HepG2 (cell line): ENCODE measurements at regions of chr19 and their contacts with region 1.

Region 1: DNA sequence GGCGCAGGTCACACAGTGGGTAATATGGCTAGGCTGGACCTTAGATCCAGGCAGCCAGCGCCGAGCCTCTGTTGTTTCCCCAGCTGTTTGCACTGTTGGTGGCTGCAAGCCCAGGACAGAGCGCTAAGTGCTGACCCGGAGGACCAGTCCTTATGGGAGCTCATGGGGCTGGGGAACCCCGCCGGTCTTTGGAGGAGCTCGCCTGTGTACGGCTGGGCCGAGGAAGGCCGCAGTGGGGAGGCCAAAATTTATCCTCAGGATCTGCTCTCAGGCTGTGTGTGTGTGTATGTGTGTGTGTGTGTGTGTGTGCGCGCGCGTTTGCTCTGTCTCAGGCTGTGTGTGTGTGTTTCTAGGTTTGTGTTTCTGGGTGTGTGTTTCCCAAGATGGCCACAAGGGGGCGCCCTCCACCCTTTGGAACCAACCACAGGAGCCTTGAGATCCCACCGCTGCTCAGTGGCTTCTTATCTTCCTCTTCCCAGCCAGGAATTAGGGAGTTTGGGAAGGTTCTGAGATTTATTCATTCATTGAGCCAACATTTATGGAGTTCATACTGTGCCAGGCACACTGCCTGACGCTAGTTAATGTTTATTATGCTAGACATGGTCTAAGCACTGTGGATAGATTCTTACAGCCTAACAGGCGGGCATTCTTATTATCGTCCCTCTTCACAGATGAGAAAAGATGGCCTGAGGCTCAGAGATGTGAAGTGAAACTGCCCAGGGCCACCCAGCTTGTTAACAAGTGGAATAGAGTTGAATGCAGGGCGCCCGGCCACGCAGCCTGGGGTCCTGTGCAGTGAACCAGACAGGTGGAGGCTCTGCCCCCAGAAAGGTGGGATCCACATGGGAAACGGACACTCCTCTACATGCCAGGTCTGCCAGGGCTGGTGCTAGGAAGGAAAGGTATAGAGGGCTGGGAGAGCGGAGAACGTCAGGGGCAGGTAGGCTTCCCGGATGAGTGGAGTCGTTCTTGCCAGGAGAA is 13.0 kb downstream of the PGLYRP1 start:
- DNase-seq: peak; percentile 28
- ATAC-seq: peak; percentile 88
- H3K4me3 ChIP-seq: no peak overlapping the region; a peak in 1 of 6 replicates
- H3K27ac ChIP-seq: no peak overlapping the region
- H3K4me1 ChIP-seq: no peaks in the 10 kb centered on the region
- H3K27me3 ChIP-seq: no peaks in the 10 kb centered on the region
- CTCF ChIP-seq: peak; percentile 80
- EP300 ChIP-seq: no peak
- POLR2A ChIP-seq: no peak
- RAD21 ChIP-seq: peak; percentile 20; the same call in 1 of the 2 replicates

Region 2: GRCh38 chr19:45913874-45914830 is 95.7 kb before region 1 on chr19 and contains the start of gene NANOS2:
- CTCF ChIA-PET with region 1: no interaction called
- POLR2A ChIA-PET with region 1: no interaction called
- in situ Hi-C with region 1: loop called (anchors 10 kb)
- intact Hi-C with region 1: no loop called
- DNase-seq: peak; percentile 50
- ATAC-seq: peak; percentile 64
- H3K4me3 ChIP-seq: no peak within 1 kb of the TSS
- H3K27ac ChIP-seq: no peak within 1 kb of the TSS
- H3K4me1 ChIP-seq: peaks cover 33% of the 10 kb centered on the region
- H3K27me3 ChIP-seq: peaks cover 0 to 6% of the 10 kb centered on the region in 2 experiments; a peak in 2 of 5 replicates
- CTCF ChIP-seq: peak; percentile 71
- EP300 ChIP-seq: no peak
- POLR2A ChIP-seq: no peak
- RAD21 ChIP-seq: peak; percentile 63
- total RNA-seq, gene NANOS2: not detected in 2 replicates

Region 3: GRCh38 chr19:46088101-46088500 is 78.3 kb after region 1 on chr19:
- CTCF ChIA-PET with region 1: no interaction called
- POLR2A ChIA-PET with region 1: no interaction called
- in situ Hi-C with region 1: no loop called
- intact Hi-C with region 1: no loop called
- DNase-seq: no peak
- ATAC-seq: no peak
- H3K4me3 ChIP-seq: no peak overlapping the region
- H3K27ac ChIP-seq: no peak overlapping the region
- H3K4me1 ChIP-seq: no peaks in the 10 kb centered on the region
- H3K27me3 ChIP-seq: peaks cover 0 to 7% of the 10 kb centered on the region in 2 experiments; a peak in 1 of 5 replicates
- CTCF ChIP-seq: no peak
- EP300 ChIP-seq: no peak
- POLR2A ChIP-seq: no peak
- RAD21 ChIP-seq: no peak